Tibial artery (tissue), 4 donors: ENCODE measurements at regions of chr19 and their contacts with region 1.

Region 1: DNA sequence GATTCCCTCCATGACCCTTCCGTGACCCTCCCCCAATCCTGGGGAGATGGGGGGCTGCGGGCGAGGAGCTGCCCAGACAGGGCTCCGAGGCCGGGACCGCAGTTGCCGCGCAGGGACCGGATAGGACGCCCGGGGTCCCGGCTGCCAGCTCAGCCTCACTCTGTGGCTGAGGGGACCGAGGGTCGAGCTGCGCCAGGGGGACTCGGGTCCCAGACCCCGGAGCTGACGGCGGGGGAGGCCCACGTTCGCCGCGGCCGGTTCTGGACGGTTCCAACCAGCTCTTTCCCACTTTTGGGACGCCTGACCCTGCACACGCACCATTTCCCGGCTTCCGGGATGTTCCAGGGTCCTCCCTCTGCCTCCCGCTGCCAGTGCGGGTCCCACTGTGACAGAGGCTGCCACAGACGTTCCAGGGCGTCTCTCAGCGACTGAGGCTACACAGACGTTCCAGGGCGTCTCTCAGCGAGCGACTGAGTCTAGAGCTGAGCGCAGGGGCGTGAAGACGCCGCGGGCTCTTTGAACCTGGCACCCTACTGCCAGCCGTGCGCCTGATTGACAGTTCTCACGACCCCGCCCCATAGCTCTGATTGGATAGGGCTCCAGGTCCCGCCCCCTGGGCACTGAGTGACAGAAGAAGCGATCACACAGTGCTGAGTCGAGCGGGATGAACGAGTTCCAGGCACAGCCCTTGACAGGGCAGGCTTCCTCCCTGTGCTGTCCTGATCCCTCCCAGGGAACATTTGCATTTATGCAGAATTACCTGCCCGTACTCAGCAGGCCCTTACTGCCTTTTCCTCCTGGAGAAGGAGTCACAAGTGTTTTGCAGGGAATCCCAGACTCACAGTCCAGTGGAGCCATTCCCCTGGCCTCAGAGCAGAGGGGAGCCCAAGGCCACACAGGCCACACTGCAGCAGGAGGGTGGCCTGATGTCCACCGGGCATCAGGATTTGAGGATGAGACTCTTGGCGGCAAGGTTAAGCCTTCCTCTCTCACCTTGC is at the start of gene ZNF563:
- DNase-seq: peak; percentile 99
- H3K4me3 ChIP-seq: peak within 1 kb of the TSS; percentile 74 to 88
- H3K27ac ChIP-seq: peak within 1 kb of the TSS; percentile 91 to 96
- H3K4me1 ChIP-seq: peaks cover 0 to 11% (median 4%) of the 10 kb centered on the region in 4 donors
- H3K27me3 ChIP-seq: no peaks in the 10 kb centered on the region
- CTCF ChIP-seq: no peak

Region 2: GRCh38 chr19:12365236-12366162 is 32.0 kb after region 1 on chr19 and contains the start of gene ZNF442:
- intact Hi-C with region 1: loop called (anchors 1 kb)
- DNase-seq: peak; percentile 98 to 99
- H3K4me3 ChIP-seq: peak within 1 kb of the TSS; percentile 79 to 86
- H3K27ac ChIP-seq: peak within 1 kb of the TSS; percentile 95 to 97
- H3K4me1 ChIP-seq: peaks cover 0 to 18% (median 9%) of the 10 kb centered on the region in 4 donors
- H3K27me3 ChIP-seq: no peaks in the 10 kb centered on the region
- CTCF ChIP-seq: peak; percentile 63 to 75